Activated CD8-positive, alpha-beta T cell treated with anti-CD3 and anti-CD28 coated beads for 36 hours (primary cell): ENCODE measurements at regions of chr2 and their contacts with region 1.

Region 1: DNA sequence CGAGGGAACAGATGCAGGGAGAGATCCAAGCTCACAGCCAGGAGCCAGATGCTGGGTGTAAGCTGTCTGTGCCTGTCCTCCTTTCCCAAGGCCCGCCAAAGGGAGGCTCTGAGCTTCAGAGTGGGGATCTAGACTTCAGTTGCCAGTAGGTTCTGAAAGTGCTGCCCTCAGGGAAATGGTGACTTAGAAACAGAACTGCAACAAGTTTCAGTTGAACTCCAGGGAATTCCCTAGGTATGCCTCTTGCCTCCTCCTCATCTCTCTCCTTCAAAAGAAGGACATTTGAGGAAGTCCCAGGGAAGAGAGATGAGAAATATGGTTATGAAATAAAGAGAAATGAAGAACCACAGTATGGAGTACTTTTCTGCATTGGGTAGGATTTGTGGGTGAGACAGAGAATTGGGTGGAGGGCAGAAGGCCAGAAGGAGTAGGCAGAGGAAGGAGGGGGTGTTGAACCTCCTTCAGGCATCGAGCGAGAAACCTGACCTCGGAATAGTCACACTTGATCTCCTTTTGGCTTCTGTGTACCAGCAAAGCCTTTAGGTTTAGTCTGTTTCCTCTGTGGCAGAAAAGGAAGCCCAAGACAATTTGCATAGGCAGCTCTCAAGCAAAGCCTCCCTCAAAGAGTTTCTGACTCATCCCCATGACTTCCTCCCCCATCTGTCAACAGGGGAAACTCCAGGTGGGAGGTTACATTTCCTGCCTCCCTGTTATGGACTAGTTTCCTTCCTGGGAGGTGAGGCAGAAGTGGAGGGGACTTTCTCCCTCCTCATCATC is 45.7 kb downstream of the QPCT start:
- DNase-seq: peak; percentile 81
- ATAC-seq: peak; percentile 93
- H3K4me3 Mint-ChIP-seq: peak overlapping the region; percentile 16
- H3K27ac Mint-ChIP-seq: peak overlapping the region; percentile 92
- H3K4me1 Mint-ChIP-seq: peaks cover 18% of the 10 kb centered on the region
- H3K27me3 Mint-ChIP-seq: peaks cover 2% of the 10 kb centered on the region
- CTCF ChIP-seq: no peak

Region 2: GRCh38 chr2:36973320-36973719 is 416.9 kb before region 1 on chr2:
- CTCF ChIA-PET with region 1: no interaction called
- POLR2A ChIA-PET with region 1: no interaction called
- intact Hi-C with region 1: no loop called
- DNase-seq: no peak
- ATAC-seq: no peak
- H3K4me3 Mint-ChIP-seq: no peak overlapping the region
- H3K27ac Mint-ChIP-seq: no peak overlapping the region
- H3K4me1 Mint-ChIP-seq: no peaks in the 10 kb centered on the region
- H3K27me3 Mint-ChIP-seq: no peaks in the 10 kb centered on the region
- CTCF ChIP-seq: no peak

Region 3: GRCh38 chr2:37287966-37288365 is 102.2 kb before region 1 on chr2:
- CTCF ChIA-PET with region 1: no interaction called
- POLR2A ChIA-PET with region 1: no interaction called
- intact Hi-C with region 1: no loop called
- DNase-seq: peak; percentile 44
- ATAC-seq: peak; percentile 56
- H3K4me3 Mint-ChIP-seq: no peak overlapping the region
- H3K27ac Mint-ChIP-seq: no peak overlapping the region
- H3K4me1 Mint-ChIP-seq: no peaks in the 10 kb centered on the region
- H3K27me3 Mint-ChIP-seq: no peaks in the 10 kb centered on the region
- CTCF ChIP-seq: peak; percentile 25

Region 4: DNA sequence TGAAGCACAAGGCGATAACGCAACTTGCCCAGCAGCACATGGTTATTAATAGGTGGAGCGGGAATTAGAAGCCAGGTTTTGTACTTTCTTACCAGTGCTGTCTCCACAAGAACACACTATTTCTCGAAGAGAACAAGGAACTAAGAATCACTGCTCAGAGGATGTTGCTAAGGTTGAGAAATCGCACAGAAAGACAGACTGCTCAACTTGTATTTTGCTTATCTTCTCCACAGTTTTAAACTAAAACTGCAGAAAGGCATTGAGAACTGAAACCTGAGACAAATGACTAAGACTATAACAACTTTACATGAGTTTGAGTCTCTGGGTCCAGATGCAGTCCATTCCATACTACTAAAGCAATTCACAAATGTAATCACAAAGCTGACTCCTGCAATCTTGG is 71.8 kb before region 1 on chr2:
- CTCF ChIA-PET with region 1: interaction called, 15 read pairs
- POLR2A ChIA-PET with region 1: interaction called, 3 read pairs
- intact Hi-C with region 1: loop called (anchors 5 kb)
- DNase-seq: no peak
- ATAC-seq: peak; percentile 31
- H3K4me3 Mint-ChIP-seq: no peak overlapping the region
- H3K27ac Mint-ChIP-seq: no peak overlapping the region
- H3K4me1 Mint-ChIP-seq: peaks cover 61% of the 10 kb centered on the region
- H3K27me3 Mint-ChIP-seq: no peaks in the 10 kb centered on the region
- CTCF ChIP-seq: no peak

Region 5: DNA sequence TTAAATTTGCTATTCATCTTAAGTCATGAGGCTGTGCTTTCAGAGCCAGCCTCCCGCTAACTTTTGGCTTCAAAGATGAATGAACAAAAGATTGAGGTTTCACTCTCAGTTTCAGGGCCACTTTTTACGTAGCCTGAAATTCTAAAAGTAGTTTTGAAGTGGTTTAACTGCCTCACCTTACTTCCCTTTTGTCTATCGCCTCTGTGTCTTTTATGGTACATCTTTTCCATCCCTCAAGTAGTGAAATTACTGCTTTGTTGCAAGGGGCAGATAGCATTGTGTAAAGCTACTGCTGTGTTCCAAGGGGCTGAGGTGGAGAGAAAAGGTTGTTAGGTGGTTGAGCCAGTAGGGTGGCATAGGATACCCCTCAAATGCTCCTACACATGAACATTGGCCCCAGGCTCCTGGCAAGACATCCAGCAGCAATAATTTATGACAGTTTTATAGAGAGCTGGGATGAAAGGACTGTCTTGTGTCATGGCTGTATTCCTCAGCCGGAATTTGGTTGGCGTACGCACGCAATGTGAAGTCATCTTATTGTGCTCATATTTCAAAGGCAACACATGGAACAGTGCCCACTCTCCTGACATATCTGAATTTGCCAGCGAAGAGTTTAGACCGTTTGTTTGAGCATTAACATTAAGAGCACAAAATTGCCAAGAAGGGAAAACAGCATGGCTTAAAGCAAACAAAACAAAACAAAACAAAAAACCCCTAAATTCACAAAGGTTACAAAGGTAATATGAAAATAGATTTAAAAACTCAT is 13.6 kb before region 1 on chr2:
- CTCF ChIA-PET with region 1: interaction called, 42 read pairs
- POLR2A ChIA-PET with region 1: interaction called, 27 read pairs
- intact Hi-C with region 1: loop called (anchors 1 kb)
- DNase-seq: peak; percentile 72
- ATAC-seq: peak; percentile 83
- H3K4me3 Mint-ChIP-seq: peak overlapping the region; percentile 28
- H3K27ac Mint-ChIP-seq: peak overlapping the region; percentile 81
- H3K4me1 Mint-ChIP-seq: peaks cover 29% of the 10 kb centered on the region
- H3K27me3 Mint-ChIP-seq: peaks cover 38% of the 10 kb centered on the region
- CTCF ChIP-seq: no peak

Region 6: DNA sequence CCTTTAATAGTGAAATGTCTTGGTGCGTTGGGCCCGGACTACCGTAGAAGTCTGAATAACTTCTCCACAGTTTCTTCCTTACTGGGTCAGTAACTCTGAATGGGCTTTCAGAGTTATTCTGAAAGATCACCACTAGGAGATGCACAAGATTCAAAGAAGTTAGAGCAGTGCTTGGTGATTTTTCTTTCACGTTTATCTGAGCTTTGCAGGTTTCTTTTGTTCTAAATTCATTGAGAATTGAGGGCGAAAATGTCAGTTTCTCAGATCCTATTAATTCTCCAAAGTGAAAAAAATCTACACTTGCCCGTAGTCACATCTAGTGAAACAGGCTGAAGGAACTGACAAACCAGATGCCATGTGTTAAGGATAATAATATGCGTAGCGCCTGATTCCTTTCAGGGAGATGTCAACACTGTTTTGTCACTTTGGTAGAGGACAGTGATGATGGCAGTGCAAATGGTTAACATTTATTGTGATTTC is 24.3 kb after region 1 on chr2:
- CTCF ChIA-PET with region 1: interaction called, 21 read pairs
- POLR2A ChIA-PET with region 1: no interaction called
- intact Hi-C with region 1: no loop called
- DNase-seq: no peak
- ATAC-seq: peak; percentile 53
- H3K4me3 Mint-ChIP-seq: no peak overlapping the region
- H3K27ac Mint-ChIP-seq: no peak overlapping the region
- H3K4me1 Mint-ChIP-seq: peaks cover 12% of the 10 kb centered on the region
- H3K27me3 Mint-ChIP-seq: no peaks in the 10 kb centered on the region
- CTCF ChIP-seq: peak; percentile 75

Region 7: GRCh38 chr2:37795938-37796337 is 405.8 kb after region 1 on chr2:
- CTCF ChIA-PET with region 1: interaction called, 13 read pairs
- POLR2A ChIA-PET with region 1: no interaction called
- intact Hi-C with region 1: no loop called
- DNase-seq: no peak
- ATAC-seq: no peak
- H3K4me3 Mint-ChIP-seq: no peak overlapping the region
- H3K27ac Mint-ChIP-seq: no peak overlapping the region
- H3K4me1 Mint-ChIP-seq: peaks cover 3% of the 10 kb centered on the region
- H3K27me3 Mint-ChIP-seq: no peaks in the 10 kb centered on the region
- CTCF ChIP-seq: no peak

Region 8: GRCh38 chr2:37890893-37891495 is 500.8 kb after region 1 on chr2:
- CTCF ChIA-PET with region 1: interaction called, 12 read pairs
- POLR2A ChIA-PET with region 1: no interaction called
- intact Hi-C with region 1: no loop called
- DNase-seq: peak; percentile 77
- ATAC-seq: peak; percentile 77
- H3K4me3 Mint-ChIP-seq: no peak overlapping the region
- H3K27ac Mint-ChIP-seq: no peak overlapping the region
- H3K4me1 Mint-ChIP-seq: peaks cover 36% of the 10 kb centered on the region
- H3K27me3 Mint-ChIP-seq: peaks cover 3% of the 10 kb centered on the region
- CTCF ChIP-seq: peak; percentile 87